PC-9 (cell line): ENCODE measurements at regions of chr11 and their contacts with region 1.

Region 1: GRCh38 chr11:15650105-15650938 is 535.6 kb downstream of the INSC start:
- DNase-seq: peak; percentile 77 to 92
- H3K4me3 ChIP-seq: peak overlapping the region; percentile 52; the same call in 1 of the 2 replicates
- H3K27ac ChIP-seq: peak overlapping the region; percentile 88
- H3K4me1 ChIP-seq: peaks cover 50% of the 10 kb centered on the region
- H3K27me3 ChIP-seq: no peaks in the 10 kb centered on the region
- CTCF ChIP-seq: peak; percentile 90

Region 2: DNA sequence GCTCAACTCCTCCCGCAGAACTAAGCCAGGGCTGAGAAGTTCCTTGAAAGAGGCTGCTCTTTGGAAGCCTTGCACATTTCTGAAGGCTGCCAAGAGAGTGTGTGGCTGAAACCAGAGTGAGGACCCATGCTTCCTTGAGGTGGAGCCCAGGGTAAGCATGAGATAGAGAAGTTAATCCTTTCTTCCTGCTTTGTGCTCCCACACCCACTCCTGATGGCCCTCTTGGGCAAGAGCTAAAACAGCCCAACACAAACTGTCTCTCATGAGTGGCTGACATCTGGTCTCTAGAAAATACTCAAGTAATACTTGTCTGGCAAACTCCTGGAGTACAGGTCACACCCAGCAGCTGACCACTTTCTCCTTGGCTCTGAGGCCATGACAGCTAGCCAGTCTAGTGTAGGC is 11.9 kb before region 1 on chr11:
- CTCF ChIA-PET with region 1: no interaction called
- POLR2A ChIA-PET with region 1: no interaction called
- intact Hi-C with region 1: no loop called
- DNase-seq: no peak
- H3K4me3 ChIP-seq: no peak overlapping the region
- H3K27ac ChIP-seq: no peak overlapping the region
- H3K4me1 ChIP-seq: no peaks in the 10 kb centered on the region
- H3K27me3 ChIP-seq: no peaks in the 10 kb centered on the region
- CTCF ChIP-seq: no peak

Region 3: DNA sequence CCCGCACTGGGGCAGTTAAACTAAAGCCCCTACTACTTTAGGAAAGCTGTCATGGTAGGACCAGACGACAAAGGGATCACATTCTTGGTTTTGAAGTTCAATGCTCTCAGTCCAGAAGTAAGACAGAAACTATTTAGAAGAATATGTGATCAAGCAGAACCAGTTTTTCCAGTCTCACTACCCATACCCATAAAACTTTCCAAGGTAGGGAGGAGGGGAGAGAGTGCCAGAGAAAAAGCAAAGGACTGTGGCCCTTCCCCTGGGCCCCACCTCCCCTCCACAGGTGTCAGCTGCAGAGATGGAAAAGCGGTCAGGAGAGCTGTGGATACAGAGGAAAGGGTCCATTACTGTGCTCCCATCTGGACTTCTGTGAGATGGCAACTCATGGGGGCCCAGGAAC is 118.9 kb after region 1 on chr11:
- CTCF ChIA-PET with region 1: no interaction called
- POLR2A ChIA-PET with region 1: no interaction called
- intact Hi-C with region 1: loop called (anchors 2 kb)
- DNase-seq: peak; percentile 44 to 77
- H3K4me3 ChIP-seq: no peak overlapping the region
- H3K27ac ChIP-seq: peak overlapping the region; percentile 76
- H3K4me1 ChIP-seq: peaks cover 39% of the 10 kb centered on the region
- H3K27me3 ChIP-seq: no peaks in the 10 kb centered on the region
- CTCF ChIP-seq: no peak

Region 4: DNA sequence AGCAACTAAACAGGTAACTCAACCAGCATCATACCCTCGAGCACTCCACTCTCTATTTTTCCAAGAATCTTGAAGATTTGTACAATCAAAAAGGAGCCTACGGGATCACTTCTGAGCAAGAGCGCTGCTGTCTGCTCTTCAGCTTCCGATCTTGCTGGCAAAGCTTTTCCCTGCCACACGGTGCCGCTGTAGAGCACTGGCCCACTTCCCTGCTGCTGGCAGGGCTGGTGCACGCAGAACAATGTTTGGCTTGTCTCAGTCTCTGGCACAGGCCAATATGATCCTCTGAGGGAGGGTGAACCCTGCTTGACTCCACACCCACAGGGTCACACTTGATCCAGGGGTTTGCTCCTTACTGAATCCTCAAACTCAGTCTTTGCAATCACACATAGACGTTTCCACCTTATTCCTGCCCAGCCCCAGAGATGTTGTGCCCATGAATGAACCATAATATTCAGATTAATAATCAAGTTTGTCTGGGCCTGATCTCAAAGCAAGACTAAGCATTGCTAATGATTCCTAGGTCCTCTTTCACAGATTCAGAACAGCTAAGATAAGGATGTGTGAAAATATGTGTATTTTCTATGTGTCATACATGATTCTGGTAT is 169.5 kb after region 1 on chr11:
- CTCF ChIA-PET with region 1: no interaction called
- POLR2A ChIA-PET with region 1: no interaction called
- intact Hi-C with region 1: loop called (anchors 1 kb)
- DNase-seq: no peak
- H3K4me3 ChIP-seq: no peak overlapping the region
- H3K27ac ChIP-seq: no peak overlapping the region
- H3K4me1 ChIP-seq: peaks cover 31% of the 10 kb centered on the region
- H3K27me3 ChIP-seq: no peaks in the 10 kb centered on the region
- CTCF ChIP-seq: no peak; the same call in 1 of the 2 replicates

Region 5: DNA sequence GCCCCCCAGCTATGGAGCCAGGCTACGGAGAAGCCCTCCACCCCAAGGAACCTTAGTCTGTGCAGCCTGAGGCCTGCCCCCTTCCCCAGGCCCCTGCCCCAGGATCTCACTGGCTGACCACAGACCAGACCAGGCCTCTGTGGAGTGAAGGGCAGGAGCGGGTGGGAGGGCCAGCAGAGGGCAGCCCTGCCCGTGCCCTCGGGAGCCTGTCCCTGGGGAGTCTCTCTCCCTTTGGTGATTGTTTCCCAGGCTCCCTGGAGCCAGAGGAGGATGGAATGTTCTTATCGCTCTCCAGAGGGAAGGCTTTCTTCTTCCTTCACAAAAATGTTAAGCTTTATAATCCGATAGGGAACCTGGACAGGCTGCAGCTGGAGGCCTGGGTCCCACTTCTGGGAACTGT is 250.7 kb after region 1 on chr11:
- CTCF ChIA-PET with region 1: no interaction called
- POLR2A ChIA-PET with region 1: no interaction called
- intact Hi-C with region 1: loop called (anchors 5 kb)
- DNase-seq: no peak
- H3K4me3 ChIP-seq: no peak overlapping the region
- H3K27ac ChIP-seq: no peak overlapping the region
- H3K4me1 ChIP-seq: peaks cover 34% of the 10 kb centered on the region
- H3K27me3 ChIP-seq: no peaks in the 10 kb centered on the region
- CTCF ChIP-seq: no peak

Region 6: DNA sequence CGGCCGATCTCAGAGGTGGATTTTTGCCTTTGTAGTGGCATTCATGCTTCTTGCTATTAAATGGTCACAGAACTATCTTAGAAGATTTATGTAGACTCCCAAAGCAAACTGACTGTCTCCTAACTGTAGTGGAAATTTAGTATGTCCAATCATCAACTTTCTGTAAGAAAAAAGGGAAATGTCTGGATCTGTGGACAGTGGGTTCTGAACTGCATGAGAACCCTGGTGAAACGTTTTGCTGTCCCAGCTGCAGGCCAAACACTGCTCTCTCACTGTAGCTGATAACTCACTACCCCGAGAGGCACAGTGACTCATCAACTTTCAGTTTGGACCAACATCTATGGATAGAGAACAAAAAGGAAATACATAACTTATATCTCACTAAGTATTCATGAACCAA is 319.0 kb after region 1 on chr11:
- CTCF ChIA-PET with region 1: no interaction called
- POLR2A ChIA-PET with region 1: no interaction called
- intact Hi-C with region 1: loop called (anchors 10 kb)
- DNase-seq: peak; percentile 35 to 48
- H3K4me3 ChIP-seq: no peak overlapping the region; the same call in 1 of the 2 replicates
- H3K27ac ChIP-seq: peak overlapping the region; percentile 63
- H3K4me1 ChIP-seq: peaks cover 61% of the 10 kb centered on the region
- H3K27me3 ChIP-seq: no peaks in the 10 kb centered on the region
- CTCF ChIP-seq: no peak

Region 7: GRCh38 chr11:16299884-16300782 is 649.8 kb after region 1 on chr11:
- CTCF ChIA-PET with region 1: no interaction called
- POLR2A ChIA-PET with region 1: no interaction called
- intact Hi-C with region 1: loop called (anchors 10 kb)
- DNase-seq: no peak
- H3K4me3 ChIP-seq: no peak overlapping the region
- H3K27ac ChIP-seq: no peak overlapping the region
- H3K4me1 ChIP-seq: no peaks in the 10 kb centered on the region
- H3K27me3 ChIP-seq: no peaks in the 10 kb centered on the region
- CTCF ChIP-seq: no peak

Region 8: GRCh38 chr11:16613512-16614381 is 963.4 kb after region 1 on chr11:
- CTCF ChIA-PET with region 1: no interaction called
- POLR2A ChIA-PET with region 1: no interaction called
- intact Hi-C with region 1: loop called (anchors 1 kb)
- DNase-seq: peak; percentile 51 to 74
- H3K4me3 ChIP-seq: peak overlapping the region; percentile 54
- H3K27ac ChIP-seq: no peak overlapping the region
- H3K4me1 ChIP-seq: no peaks in the 10 kb centered on the region
- H3K27me3 ChIP-seq: no peaks in the 10 kb centered on the region
- CTCF ChIP-seq: peak; percentile 77